ENCODE measurements at regions of chr20 and their contacts with region 1.

Region 1: DNA sequence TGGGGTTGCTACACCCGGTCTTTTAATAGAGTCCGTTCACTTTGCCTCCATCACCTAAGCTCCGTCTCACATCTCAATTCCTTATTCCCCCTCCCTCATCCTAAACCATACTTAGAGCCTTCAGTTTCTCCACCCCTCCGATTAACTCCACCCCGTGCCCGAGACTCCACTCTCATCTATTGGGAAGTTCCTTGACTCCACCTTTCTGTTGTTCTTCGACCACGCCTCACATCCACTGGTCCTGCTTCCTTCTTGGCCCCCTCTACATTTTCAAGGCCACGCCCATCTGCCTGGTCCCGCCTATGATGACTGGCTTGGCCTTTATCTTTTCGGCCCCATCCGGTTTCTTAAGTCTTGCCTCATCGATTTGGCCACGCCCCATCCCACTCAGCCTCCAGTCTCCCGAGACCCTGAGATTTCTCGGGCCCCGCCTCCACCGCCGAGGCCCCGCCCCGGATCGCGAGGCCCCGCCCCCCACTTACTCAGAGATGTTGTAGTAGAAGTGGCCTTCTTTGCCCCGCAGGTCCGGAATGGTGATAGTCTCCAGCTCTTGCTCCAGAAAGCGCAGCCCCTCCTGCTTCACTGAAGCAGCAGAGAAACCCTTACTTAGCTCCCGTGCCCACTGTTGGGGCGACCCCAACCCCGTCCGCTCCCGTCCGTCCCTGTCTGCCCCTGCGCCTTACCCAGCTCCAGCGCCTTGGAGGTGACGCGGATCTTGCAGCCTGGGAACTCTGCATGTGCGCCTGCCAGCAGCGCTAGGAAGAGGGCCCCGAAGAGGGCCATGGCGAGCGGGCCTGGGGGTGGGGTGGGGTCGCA is 1.1 kb downstream of the PLTP start:
- DNase-seq: peak; percentile 78 to 93 (median 88)
- ATAC-seq: peak; percentile 95
- H3K4me3 ChIP-seq: peak overlapping the region; percentile 53 to 75
- H3K4me3 Mint-ChIP-seq: peak overlapping the region; percentile 89
- H3K27ac ChIP-seq: no peak overlapping the region
- H3K27ac Mint-ChIP-seq: peak overlapping the region; percentile 14
- H3K4me1 ChIP-seq: peaks cover 17% of the 10 kb centered on the region
- H3K4me1 Mint-ChIP-seq: peaks cover 16% of the 10 kb centered on the region
- H3K27me3 ChIP-seq: peaks cover 0 to 5% of the 10 kb centered on the region in 2 experiments
- H3K27me3 Mint-ChIP-seq: peaks cover 15% of the 10 kb centered on the region
- CTCF ChIP-seq: no peak

Region 2: DNA sequence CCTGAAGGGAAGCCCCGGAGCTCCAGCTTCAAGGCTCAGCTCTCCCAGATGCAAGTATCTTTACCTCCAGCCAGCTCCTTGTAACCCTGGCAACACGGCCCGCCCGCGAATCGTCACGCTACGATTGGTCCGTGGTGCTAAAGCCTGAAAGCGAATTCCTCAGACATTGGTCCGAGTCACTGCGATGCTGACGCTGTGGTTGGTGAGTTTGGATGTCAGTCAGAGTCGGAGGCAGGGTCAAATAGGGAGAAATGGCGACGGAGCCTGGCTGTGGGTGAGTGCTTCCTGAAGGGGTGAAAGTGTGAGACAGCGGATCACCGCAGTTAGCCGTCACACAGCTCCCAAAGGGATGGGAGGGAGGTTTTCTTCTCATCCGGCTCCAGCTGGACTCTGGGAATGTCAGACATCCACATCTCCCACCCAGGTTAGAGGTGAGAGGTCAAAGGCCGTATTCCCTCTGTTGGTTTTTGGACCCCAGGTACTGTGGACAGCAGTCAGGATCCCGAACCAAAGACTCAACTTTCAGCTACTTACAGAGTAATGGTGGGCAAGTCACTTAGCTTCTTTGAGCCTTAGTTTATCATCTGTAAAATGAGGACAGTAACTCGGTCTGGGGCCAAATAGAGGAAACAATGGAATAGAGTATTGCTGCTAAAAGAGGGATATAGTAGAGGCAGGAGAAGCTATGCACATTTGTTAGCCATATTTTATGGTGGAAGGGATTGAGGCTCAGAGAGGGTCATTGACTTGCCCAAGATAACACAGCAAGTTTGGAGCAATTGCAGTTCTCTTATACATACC is 29.7 kb before region 1 on chr20 and contains the start of gene ZSWIM1:
- CTCF ChIA-PET with region 1: no interaction called
- POLR2A ChIA-PET with region 1: interaction called, 8 read pairs
- intact Hi-C with region 1: loop called (anchors 2 kb)
- DNase-seq: peak; percentile 96 to 100 (median 99)
- ATAC-seq: peak; percentile 97
- H3K4me3 ChIP-seq: peak within 1 kb of the TSS; percentile 71 to 82
- H3K4me3 Mint-ChIP-seq: peak within 1 kb of the TSS; percentile 91
- H3K27ac ChIP-seq: peak within 1 kb of the TSS; percentile 75 to 87
- H3K27ac Mint-ChIP-seq: peak within 1 kb of the TSS; percentile 96
- H3K4me1 ChIP-seq: peaks cover 18% of the 10 kb centered on the region
- H3K4me1 Mint-ChIP-seq: peaks cover 40% of the 10 kb centered on the region
- H3K27me3 ChIP-seq: no peaks in the 10 kb centered on the region
- H3K27me3 Mint-ChIP-seq: no peaks in the 10 kb centered on the region
- CTCF ChIP-seq: no peak
- total RNA-seq, gene ZSWIM1: 8.5 to 9.2 TPM

Measured in CD8-positive, alpha-beta T cell (primary cell).